Right ventricle myocardium inferior (tissue), 1 donor: ENCODE measurements at regions of chr1 and their contacts with region 1.

Region 1: GRCh38 chr1:2381741-2382620 is 9.4 kb downstream of the MORN1 start:
- DNase-seq: peak; percentile 92
- ATAC-seq: peak; percentile 96

Region 2: DNA sequence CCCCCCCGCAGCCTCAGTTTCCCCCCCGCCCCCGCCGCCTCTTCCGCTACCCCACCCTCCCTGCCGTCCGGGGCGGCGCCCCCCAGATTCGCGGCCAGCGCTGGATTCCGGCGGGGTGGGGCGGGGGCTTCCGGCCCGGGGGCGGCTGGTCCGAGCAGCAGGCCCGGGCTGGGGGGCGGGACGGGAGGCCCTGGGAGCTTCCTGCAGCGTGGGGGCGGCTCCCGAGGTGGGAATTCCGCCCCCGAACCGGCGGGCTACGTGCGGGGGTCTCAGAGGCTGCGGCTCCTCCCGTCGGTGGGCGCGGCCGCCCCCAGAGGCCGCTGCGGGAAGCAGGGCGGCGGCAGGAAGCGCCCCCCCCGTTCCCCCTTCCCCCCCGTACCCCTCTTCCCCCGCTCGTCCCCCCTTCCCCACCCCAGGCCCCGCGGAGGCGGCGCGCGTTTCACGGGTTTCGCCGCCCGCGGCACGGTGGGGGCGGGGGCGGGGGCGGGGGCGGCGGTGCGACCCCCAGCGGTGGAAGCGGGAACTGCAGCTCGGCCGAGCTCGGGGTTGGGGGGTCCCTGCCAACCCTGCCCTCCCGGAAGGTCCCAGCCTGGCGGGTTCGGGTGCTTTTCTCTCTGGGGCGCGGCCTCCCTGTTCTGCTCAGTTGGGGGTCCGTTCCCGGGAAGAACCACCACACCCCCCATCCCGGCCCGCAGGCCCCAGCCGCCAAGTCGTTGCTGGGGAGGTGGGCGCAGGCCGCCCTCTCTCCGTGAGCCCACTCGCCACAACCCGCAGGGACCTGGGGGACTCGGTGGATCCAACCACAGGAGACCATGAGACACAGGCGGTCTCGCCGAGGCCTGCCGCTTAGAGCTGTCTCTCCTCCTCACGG is 66.9 kb before region 1 on chr1:
- intact Hi-C with region 1: loop called (anchors 5 kb)
- DNase-seq: no peak
- ATAC-seq: peak; percentile 30

Region 3: DNA sequence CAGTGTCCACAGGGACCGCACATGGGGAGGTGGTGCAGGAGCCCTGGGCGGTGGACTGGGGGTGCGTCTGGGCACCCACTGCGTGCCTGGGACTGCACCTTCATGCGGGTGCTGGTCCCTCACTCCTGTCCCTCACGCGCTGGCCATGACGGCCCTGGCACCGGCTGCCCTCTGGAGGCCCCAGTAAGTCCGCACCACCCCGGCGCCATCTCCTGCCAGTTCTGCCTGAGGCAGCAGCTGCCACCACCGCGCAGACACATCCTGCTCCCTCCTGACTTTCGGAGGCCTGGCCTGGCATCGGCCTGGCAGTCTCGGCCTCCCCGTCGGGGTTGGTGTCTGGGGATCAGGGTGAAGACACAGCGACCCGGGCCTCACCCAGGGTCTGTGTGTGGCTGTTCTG is 55.5 kb before region 1 on chr1:
- intact Hi-C with region 1: loop called (anchors 5 kb)
- DNase-seq: no peak
- ATAC-seq: no peak

Region 4: DNA sequence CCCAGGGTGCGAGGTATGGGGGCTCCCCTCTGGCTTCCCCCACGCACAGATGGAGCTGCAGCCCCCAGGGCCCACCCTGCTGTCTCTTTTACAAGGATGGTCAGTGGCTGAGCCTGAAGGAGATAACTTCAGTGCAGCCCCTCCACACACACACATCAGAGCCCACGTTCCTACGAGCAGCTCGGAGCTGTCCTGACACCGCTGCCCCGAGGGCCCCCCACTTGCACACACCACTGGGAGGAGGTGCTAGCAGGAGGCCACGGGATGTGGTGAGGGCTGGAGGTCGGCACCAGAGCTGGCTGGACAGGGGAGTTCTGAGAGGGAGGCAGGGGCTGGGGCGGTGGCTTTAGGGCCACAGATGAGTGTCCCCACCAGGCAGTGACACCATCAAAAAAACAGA is 44.5 kb before region 1 on chr1:
- intact Hi-C with region 1: no loop called
- DNase-seq: no peak
- ATAC-seq: no peak